GM12878 (cell line): ENCODE measurements at regions of chr2 and their contacts with region 1.

Region 1: GRCh38 chr2:62163106-62163831 is 32.6 kb upstream of the B3GNT2 start:
- DNase-seq: no peak
- ATAC-seq: no peak
- H3K4me3 ChIP-seq: no peak overlapping the region
- H3K27ac ChIP-seq: no peak overlapping the region
- H3K4me1 ChIP-seq: peaks cover 4% of the 10 kb centered on the region; the same call in 1 of the 2 replicates
- H3K27me3 ChIP-seq: no peaks in the 10 kb centered on the region
- CTCF ChIP-seq: no peak
- EP300 ChIP-seq: no peak
- POLR2A ChIP-seq: no peak
- RAD21 ChIP-seq: no peak

Region 2: DNA sequence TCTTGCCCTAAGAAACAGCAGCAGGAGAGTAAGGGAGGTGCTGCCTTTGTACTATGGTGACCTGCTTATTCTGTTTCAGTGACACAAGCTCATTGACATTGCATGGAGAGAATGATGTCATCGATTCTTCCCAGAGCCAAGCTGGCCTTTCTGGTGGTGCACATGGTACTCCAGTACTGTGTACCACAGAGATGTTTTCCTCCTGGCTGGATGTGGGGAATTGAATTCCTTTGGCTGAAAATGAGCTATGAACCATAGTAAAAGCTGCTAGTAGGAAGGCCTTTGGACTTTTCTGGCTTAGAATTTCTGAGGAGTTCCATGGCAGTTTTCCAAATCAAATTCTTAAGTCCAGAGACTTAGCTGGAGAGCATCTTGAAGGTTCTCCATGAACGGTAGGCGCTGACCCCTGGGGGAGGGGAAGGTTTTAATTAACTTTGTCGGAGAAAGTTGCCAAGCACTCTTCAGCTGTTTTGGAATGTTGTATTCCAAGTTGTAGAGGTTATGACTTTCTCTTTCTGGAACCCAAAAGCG is 15.5 kb after region 1 on chr2:
- CTCF ChIA-PET with region 1: interaction called, 3 read pairs
- POLR2A ChIA-PET with region 1: no interaction called
- RAD21 ChIA-PET with region 1: no interaction called
- SMC1A ChIA-PET with region 1: interaction called, 18 read pairs
- in situ Hi-C with region 1: no loop called
- intact Hi-C with region 1: no loop called
- DNase-seq: no peak
- ATAC-seq: no peak
- H3K4me3 ChIP-seq: no peak overlapping the region
- H3K27ac ChIP-seq: no peak overlapping the region
- H3K4me1 ChIP-seq: peaks cover 5% of the 10 kb centered on the region; the same call in 1 of the 2 replicates
- H3K27me3 ChIP-seq: no peaks in the 10 kb centered on the region
- CTCF ChIP-seq: no peak
- EP300 ChIP-seq: no peak
- POLR2A ChIP-seq: no peak
- RAD21 ChIP-seq: no peak